ENCODE measurements at regions of chr12 and their contacts with region 1.

Region 1: DNA sequence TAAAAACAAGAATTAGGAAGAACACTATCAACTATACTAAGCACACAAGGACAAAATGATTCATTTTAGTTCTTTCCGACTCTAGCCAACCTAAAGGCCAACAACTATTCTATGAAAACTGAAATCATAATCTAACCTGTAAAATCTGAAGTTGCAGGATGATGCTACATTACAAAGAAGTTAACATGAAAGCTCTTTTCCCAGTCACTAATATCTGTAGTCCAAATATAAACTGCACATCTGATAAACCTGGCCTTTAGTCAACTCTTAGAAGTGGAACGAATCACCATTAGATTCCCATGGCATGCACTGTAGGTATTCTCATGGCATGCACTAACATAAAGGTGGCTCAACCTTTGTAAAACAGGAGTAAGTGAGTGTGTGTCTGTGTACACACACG is 41.7 kb downstream of the BLTP3B start:
- DNase-seq: no peak
- H3K4me3 Mint-ChIP-seq: no peak overlapping the region
- H3K27ac Mint-ChIP-seq: peak overlapping the region; percentile 53
- H3K4me1 Mint-ChIP-seq: peaks cover 15% of the 10 kb centered on the region
- H3K27me3 Mint-ChIP-seq: no peaks in the 10 kb centered on the region

Region 2: GRCh38 chr12:100058482-100059029 is 42.4 kb before region 1 on chr12:
- intact Hi-C with region 1: loop called (anchors 5 kb)
- DNase-seq: no peak
- H3K4me3 Mint-ChIP-seq: no peak overlapping the region
- H3K27ac Mint-ChIP-seq: no peak overlapping the region
- H3K4me1 Mint-ChIP-seq: no peaks in the 10 kb centered on the region
- H3K27me3 Mint-ChIP-seq: no peaks in the 10 kb centered on the region

Measured in activated T-helper 1 cell treated with anti-CD3 and anti-CD28 coated beads, Interleukin-12 subunit alpha, Interleukin-12 subunit beta, Interleukin-2, Interleukin-4 antibody, amounts not matched to agents 30 ng/mL and 10 ng/mL and 1 ng/mL, durations not matched to agents 14 hours and 24 hours and 36 hours (primary cell).